Posterior vena cava (tissue), 2 donors: ENCODE measurements at regions of chr10 and their contacts with region 1.

Region 1: DNA sequence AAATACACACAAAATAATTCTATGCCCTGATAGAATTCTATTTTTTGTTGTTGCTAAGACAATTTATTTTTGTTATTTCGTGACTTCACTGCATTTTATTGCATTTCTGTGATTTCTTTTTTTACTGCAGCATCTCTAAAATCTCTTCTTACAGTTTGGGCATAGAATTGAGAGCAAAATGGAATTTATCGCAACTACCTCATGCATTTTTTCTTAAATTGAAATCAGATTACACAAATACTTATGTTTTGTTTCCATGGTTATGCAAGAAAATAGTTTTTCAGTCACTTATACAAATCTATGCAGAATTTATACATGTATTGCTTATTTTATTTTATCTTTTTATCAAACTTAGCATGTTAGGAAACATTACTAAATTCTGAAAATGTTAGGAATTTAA is 781.8 kb upstream of the LRRTM3 start:
- DNase-seq: no peak

Region 2: GRCh38 chr10:66102756-66103155 is 41.3 kb before region 1 on chr10:
- intact Hi-C with region 1: no loop called
- DNase-seq: no peak

Region 3: DNA sequence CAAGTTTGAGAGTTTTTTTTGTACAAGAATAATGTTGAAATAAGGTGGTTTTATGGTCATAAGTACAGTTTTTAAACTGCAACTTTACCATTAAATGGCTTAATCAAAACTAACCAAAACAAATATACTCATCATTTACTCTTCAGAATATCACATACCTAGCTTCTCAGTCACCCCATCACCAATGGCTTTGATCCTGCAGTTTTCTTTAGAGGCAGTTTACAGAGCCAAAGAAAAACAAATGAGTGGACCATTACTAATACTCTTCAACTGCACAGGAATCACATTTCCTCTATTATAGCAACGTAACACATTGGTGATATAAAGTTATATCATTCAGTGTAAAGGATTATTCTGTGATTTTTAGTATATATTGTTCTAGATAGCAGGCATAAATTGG is 205.7 kb after region 1 on chr10:
- intact Hi-C with region 1: loop called in 1 of 2 experiments (anchors 5 kb)
- DNase-seq: no peak